ENCODE measurements at regions of chr2 and their contacts with region 1.

Region 1: DNA sequence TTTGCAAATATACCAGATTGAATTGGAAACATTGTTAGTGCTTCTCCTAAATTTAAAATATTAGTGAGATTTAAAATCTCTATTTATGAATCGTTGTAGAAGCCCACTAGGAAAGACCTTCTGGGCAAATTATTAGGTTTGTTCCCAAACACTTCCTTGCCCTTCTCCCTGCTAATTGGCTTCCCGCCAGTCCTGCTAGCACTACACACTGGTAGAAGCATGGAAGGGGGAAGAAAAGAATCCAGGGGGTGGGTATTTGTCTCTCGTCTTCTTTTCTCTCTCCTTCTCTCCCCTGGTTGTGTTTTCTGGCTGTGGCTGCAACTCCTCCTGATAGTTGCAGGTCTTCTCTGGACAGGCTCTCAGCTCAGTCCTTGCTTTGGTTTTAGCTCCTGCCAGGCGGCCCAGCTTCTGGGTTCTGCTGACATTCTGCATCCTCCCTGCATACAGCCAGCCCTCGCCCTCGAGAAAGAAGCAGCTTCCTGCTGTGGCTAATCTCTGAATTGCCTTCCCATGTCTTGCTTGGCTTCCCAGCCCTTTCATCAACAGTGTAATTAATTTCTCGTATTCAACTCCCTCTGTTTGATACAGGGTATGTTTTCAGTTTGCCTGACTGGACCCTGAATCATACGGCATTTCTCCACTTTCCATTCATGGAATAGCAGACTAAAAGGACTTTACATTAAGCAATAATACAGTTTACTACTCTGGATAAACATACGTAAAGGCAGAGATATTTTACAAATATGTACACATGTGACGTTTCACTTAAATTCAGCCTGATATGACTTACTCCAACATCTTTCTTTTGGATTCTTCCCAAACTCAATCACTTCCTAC is 6.9 kb upstream of the PARD3B start:
- DNase-seq: no peak
- H3K4me3 Mint-ChIP-seq: no peak overlapping the region
- H3K27ac Mint-ChIP-seq: no peak overlapping the region
- H3K4me1 Mint-ChIP-seq: peaks cover 23% of the 10 kb centered on the region
- H3K27me3 Mint-ChIP-seq: no peaks in the 10 kb centered on the region
- CTCF ChIP-seq: no peak

Region 2: GRCh38 chr2:203782262-203782976 is 756.0 kb before region 1 on chr2:
- CTCF ChIA-PET with region 1: no interaction called
- intact Hi-C with region 1: no loop called
- DNase-seq: peak; percentile 80
- H3K4me3 Mint-ChIP-seq: no peak overlapping the region
- H3K27ac Mint-ChIP-seq: peak overlapping the region; percentile 70
- H3K4me1 Mint-ChIP-seq: peaks cover 30% of the 10 kb centered on the region
- H3K27me3 Mint-ChIP-seq: no peaks in the 10 kb centered on the region
- CTCF ChIP-seq: peak; percentile 79

Region 3: DNA sequence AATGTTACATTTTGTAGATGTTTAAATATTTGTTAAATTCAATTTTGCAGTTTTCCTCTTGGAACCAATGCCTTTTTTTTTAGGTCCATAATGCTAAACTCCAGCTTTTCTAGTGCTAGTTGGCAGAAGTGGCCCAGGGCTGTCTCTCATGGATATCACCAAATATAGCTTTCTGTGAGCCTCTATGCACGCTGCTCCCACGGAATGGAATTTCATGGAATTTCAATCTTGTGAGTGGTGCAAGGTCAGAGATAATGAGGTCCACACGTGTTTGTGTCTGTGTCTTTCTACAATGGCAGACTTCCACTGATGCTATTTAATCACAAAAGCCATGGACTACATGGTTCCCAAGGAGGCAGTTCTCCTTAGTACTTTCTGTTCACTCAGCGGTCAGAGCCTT is 184.6 kb before region 1 on chr2:
- CTCF ChIA-PET with region 1: interaction called, 10 read pairs
- intact Hi-C with region 1: no loop called
- DNase-seq: no peak
- H3K4me3 Mint-ChIP-seq: no peak overlapping the region
- H3K27ac Mint-ChIP-seq: no peak overlapping the region
- H3K4me1 Mint-ChIP-seq: no peaks in the 10 kb centered on the region
- H3K27me3 Mint-ChIP-seq: no peaks in the 10 kb centered on the region
- CTCF ChIP-seq: no peak